ENCODE measurements at regions of chr15 and their contacts with region 1.

Region 1: DNA sequence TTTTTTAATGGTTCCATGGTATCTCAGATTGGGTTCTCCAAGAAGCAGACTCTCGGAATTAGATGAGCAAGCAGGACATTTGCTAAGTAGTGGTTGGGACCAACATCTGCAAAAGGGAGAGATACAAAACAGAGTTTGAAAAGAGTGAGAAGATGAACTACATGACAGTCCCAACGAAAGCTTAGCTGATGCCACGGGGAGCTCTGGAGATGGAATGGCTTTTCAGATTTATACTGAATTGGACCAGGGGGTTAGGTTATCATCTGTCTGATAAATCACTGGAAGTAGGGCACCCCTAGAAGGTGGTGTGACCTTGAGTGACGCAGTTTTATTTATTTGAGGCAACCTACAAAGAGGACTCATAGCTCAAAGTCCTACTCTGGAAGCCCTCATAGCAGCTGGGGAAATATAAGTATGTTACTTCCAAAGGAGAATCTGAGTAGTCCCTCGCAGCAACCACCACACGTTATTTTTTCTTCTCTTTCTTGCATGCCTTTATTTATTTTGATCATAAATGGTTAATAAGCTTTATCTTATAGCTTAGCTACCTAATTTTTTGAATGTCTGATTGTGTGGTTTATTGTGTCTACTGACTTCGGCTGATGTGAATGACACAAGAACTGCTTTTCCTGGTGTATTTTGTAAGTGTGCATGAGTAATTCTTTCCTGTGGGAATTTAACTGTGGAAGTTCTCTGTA is 815.4 kb downstream of the SQOR start:
- DNase-seq: no peak
- H3K4me3 ChIP-seq: no peak overlapping the region
- CTCF ChIP-seq: no peak

Region 2: DNA sequence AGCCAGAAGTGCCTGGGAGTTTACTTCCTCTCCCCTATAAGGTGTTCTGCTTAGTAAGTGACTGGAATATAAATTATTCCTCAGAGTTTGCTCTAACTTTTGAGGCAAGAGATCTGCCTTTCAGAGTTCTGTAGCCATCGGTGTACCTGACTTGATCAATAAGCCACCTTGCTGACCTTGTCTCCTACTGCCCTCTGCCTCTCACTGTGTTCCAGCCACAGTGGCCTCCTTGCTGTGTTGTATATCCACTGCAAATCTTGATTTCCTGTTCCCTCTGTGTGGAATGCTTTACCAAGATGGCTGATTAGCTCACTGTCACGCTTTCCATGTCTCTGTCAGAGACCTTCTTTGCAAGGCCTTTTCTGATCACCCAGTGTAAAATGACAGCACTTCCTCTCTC is 373.0 kb before region 1 on chr15:
- in situ Hi-C with region 1: no loop called
- DNase-seq: no peak
- H3K4me3 ChIP-seq: no peak overlapping the region
- CTCF ChIP-seq: no peak

Region 3: GRCh38 chr15:46242935-46243334 is 207.3 kb before region 1 on chr15:
- in situ Hi-C with region 1: no loop called
- DNase-seq: no peak
- H3K4me3 ChIP-seq: no peak overlapping the region
- CTCF ChIP-seq: no peak

Region 4: GRCh38 chr15:46409841-46410301 is 40.4 kb before region 1 on chr15:
- in situ Hi-C with region 1: no loop called
- DNase-seq: no peak
- H3K4me3 ChIP-seq: no peak overlapping the region
- CTCF ChIP-seq: no peak

Region 5: GRCh38 chr15:46496491-46497115 is 46.3 kb after region 1 on chr15:
- in situ Hi-C with region 1: loop called (anchors 5 kb)
- DNase-seq: no peak
- H3K4me3 ChIP-seq: no peak overlapping the region
- CTCF ChIP-seq: no peak

Region 6: GRCh38 chr15:46525984-46526725 is 75.9 kb after region 1 on chr15:
- in situ Hi-C with region 1: no loop called
- DNase-seq: no peak
- H3K4me3 ChIP-seq: no peak overlapping the region
- CTCF ChIP-seq: no peak

Measured in astrocyte of the cerebellum (primary cell).